ENCODE measurements at regions of chr1 and their contacts with region 1.

Region 1: DNA sequence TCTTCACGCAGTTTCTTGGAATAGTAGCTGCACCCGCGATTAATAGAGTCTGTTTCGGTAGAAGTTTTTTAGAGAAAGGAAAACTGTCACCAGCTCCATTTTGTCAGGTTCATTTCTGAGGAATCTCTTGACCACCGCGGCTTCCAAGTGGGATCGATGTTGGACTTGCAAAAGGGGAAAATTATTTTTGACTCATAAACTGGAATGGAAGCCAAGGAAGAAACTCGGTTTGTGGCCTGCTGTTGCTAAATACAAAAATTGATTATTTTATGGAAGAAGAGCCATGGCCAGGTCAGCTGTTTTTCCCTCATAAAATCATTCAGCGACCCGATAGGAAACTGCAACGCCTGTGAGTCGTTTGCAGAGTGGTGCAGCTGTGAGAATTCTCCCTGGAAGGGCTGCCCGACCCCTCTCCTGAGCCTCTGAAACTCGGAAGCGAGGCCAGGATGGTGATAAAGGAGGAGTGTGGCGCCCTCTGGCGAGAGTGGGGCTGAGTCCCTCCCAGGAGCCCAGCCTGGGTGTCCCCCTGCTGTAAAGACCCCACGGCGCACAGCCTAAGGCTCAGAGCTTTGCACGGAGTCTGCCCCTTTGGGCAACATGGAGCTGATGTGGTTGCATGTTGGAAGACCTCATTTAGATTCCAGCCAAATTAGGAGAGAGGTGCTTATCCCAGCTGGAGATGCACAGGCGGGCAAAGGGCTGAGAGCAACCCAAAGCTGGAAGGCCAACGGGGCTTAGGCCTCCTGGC is 83.6 kb upstream of the SLC25A33 start:
- DNase-seq: peak; percentile 94
- ATAC-seq: peak; percentile 98
- H3K4me3 Mint-ChIP-seq: no peak overlapping the region
- H3K27ac Mint-ChIP-seq: no peak overlapping the region; the same call in 1 of the 2 replicates
- H3K4me1 Mint-ChIP-seq: 0 out of 2 replicates have a peak, but pooled peaks cover 4% of the 10 kb centered on the region
- H3K27me3 Mint-ChIP-seq: no peaks in the 10 kb centered on the region
- CTCF ChIP-seq: peak; percentile 59

Region 2: DNA sequence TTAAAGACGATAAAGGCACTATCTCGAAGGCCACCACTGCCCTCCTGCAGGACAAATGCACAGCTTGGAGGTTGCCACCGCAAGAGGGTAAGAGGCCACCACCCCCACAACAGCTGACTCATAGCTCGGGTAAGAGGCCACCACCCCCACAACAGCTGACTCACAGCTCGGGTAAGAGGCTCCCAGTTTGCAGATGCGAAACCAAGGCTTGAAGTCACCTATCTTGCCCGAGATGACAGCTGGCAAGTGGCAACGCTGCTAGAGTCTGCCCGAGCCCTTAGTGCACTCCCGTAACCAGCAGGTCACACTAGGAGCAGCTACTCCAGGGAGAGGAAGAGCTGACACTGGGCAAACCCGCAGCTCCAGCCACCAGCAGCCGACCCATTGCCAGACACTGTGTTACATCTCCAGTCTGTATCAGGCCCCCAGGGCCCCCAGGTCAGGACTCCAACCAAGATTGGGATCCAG is 180.1 kb before region 1 on chr1:
- CTCF ChIA-PET with region 1: interaction called, 32 read pairs
- POLR2A ChIA-PET with region 1: no interaction called
- DNase-seq: no peak
- ATAC-seq: no peak
- H3K4me3 Mint-ChIP-seq: no peak overlapping the region
- H3K27ac Mint-ChIP-seq: no peak overlapping the region
- H3K4me1 Mint-ChIP-seq: peaks cover 28% of the 10 kb centered on the region
- H3K27me3 Mint-ChIP-seq: no peaks in the 10 kb centered on the region; the same call in 1 of the 2 replicates
- CTCF ChIP-seq: no peak

Region 3: DNA sequence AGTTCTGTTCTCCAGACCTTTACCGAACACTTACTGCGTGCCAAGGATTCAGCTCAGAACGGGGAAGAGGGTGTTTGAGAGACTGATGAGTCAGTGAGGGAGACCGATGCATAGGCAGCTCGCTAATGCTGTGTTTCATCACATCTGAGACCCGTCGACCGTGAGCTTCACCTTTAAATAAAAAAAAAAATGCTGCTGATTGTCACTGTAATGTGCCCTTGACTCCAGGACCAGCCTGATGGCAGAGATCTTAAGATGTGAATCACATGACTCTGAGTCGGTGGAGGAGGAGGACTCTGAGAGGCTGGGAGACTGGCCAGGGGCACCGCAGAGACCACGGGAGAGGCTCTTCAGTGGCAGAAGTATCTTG is 134.2 kb before region 1 on chr1:
- CTCF ChIA-PET with region 1: interaction called, 27 read pairs
- POLR2A ChIA-PET with region 1: no interaction called
- DNase-seq: no peak
- ATAC-seq: no peak
- H3K4me3 Mint-ChIP-seq: no peak overlapping the region
- H3K27ac Mint-ChIP-seq: peak overlapping the region; percentile 94
- H3K4me1 Mint-ChIP-seq: peaks cover 30% of the 10 kb centered on the region
- H3K27me3 Mint-ChIP-seq: no peaks in the 10 kb centered on the region
- CTCF ChIP-seq: no peak

Region 4: DNA sequence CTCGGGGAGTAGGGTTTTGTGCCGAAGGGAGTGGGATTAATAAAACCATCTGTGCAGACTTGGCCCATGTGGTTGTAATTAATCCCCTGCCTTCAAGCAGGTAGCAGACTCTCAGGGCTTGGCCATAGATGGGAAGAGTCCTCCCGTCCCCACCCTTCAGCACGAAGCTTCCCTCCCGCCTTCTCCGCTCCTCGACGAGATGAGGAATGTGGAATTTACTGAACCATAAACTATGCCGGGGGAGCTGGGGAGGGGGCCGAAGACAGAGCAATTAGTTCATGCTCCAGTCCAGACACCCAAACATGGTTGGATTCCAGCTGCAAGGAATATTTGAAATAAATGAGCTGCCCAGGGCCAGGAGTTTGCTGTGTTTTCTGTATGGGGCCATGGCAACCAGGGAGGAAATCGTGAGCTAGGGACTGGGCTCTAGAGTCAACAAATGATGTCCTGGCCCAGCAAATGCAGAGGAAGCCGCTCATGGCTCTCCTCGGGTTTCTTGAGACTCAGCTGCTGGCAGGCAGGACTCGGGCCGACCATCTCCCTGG is 84.2 kb before region 1 on chr1:
- CTCF ChIA-PET with region 1: interaction called, 18 read pairs
- POLR2A ChIA-PET with region 1: no interaction called
- DNase-seq: no peak
- ATAC-seq: peak; percentile 47
- H3K4me3 Mint-ChIP-seq: no peak overlapping the region
- H3K27ac Mint-ChIP-seq: no peak overlapping the region
- H3K4me1 Mint-ChIP-seq: peaks cover 2% of the 10 kb centered on the region; the same call in 1 of the 2 replicates
- H3K27me3 Mint-ChIP-seq: no peaks in the 10 kb centered on the region
- CTCF ChIP-seq: no peak

Region 5: DNA sequence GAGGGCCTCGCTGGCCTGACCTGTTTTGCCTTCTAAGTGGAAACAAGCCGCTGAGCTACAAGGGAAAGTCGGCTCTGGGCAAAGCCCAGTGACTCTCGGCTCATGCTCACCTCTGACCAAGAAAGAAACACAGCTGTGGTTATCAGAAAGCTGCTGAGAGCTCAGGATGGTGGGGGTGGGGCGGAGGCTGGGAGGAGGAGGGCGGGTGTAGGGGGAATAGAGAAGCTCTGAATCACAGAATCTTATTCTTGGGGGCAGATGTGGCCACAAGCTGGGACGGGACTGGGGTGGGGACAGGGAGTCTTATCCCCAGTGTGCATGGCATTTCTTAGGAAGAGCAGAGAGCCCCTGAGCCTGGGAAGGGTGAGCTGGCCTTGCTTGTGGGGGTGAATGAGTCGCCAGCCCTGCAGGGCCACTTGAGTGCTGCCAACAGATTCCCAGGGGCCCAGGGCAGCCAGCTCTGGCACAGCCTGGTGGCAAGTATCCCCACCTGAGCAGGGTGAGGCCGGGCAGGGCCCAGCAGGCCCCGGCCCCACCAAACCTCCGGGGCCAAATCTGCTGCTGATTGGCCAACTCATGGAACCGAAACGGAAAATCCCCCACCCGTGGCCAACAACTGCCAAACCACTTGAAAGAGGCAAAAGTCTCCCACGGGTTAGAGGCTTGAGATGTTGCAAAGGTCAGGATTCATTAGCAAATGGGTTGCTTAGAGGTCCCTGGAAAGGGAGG is 42.3 kb before region 1 on chr1:
- CTCF ChIA-PET with region 1: interaction called, 15 read pairs
- POLR2A ChIA-PET with region 1: no interaction called
- DNase-seq: no peak
- ATAC-seq: peak; percentile 65
- H3K4me3 Mint-ChIP-seq: no peak overlapping the region
- H3K27ac Mint-ChIP-seq: no peak overlapping the region
- H3K4me1 Mint-ChIP-seq: peaks cover 8% of the 10 kb centered on the region
- H3K27me3 Mint-ChIP-seq: no peaks in the 10 kb centered on the region
- CTCF ChIP-seq: no peak

Region 6: DNA sequence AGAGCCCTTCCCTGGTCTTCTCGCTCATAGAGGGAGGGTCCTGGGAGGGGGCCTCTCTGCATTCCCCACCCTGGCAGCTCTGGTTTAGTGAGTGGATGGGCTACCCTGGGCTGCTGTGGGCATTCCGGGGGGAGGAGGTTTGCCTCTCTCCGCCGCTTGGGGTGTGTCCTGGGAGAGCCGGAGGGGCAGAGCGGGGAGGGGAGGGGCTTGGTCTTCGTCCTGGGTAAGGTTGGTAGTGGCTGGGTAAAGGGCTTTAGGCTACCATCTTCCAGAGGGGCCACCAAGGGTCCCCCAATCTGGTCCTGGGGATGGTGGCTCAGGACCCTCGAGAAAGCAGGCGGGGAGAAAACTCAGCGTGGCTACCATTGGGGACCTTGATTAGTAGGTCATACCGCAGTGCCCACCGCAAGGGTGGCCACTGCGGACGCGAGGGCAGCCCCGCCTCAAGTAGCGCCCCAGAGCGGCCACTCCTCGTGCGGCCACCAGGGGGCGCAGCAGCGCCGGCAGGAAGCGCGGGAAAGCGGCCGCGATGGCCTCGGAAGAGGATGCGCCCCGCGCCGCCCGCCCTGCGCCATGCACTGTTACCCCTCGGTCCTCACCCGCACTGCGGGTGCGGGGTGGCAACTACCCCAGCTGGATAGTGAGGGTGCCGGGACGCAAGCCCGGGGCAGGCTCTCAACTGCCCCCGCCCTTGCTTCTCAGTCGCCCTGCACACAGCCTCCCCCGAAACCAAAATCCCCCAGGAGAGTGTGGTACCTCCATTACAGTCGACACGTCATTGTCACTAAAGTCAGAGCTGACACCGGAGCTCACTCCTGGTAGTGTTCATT is 39.5 kb after region 1 on chr1:
- CTCF ChIA-PET with region 1: interaction called, 26 read pairs
- POLR2A ChIA-PET with region 1: no interaction called
- DNase-seq: peak; percentile 79
- ATAC-seq: peak; percentile 85
- H3K4me3 Mint-ChIP-seq: peak overlapping the region; percentile 57
- H3K27ac Mint-ChIP-seq: no peak overlapping the region
- H3K4me1 Mint-ChIP-seq: no peaks in the 10 kb centered on the region
- H3K27me3 Mint-ChIP-seq: peaks cover 37% of the 10 kb centered on the region
- CTCF ChIP-seq: peak; percentile 99

Region 7: DNA sequence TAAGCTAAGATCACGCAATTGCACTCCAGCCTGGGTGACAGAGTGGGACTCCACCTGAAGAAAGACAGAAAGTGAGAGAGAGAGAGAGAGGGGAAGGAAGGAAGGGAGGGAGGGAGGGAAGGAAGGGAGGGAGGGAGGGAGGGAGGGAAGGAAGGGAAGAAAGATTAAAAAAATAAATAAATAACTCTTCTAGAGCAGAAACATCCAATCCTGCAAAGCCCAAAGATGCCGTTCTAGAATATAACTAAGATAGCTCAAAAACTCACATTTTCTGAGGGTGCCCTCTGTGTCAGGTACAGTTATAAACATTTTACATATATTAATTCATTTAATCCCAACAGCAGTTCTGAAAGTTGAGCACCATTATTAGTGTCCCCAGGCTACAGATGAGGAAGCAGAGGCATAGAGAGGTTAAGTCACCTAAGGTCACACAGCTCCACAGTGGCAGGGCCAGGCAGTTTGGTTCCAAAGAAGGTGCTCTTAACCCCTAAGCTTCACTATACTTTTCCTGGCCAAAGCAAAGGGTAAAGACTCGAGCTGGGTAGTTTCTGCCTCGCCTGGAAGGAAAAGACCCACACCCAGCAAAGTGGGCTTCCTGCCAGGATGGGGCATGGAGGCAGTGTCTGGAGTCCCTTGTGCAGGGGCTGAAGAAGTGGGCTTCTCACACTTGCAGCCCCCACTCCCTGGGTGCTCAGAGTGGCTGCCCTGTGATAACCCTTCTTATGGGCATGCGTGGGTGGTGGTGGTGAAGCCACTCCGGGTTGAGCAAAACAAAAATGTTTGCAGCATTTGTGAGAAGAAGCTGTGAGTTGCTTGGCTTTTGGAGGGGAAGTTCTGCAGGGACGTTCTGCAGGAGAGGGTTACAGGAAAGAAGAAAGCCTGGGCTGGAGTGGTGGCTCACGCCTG is 187.9 kb after region 1 on chr1:
- CTCF ChIA-PET with region 1: no interaction called
- POLR2A ChIA-PET with region 1: no interaction called
- DNase-seq: no peak
- ATAC-seq: no peak
- H3K4me3 Mint-ChIP-seq: no peak overlapping the region
- H3K27ac Mint-ChIP-seq: no peak overlapping the region
- H3K4me1 Mint-ChIP-seq: no peaks in the 10 kb centered on the region
- H3K27me3 Mint-ChIP-seq: no peaks in the 10 kb centered on the region
- CTCF ChIP-seq: no peak

Measured in WTC11 (cell line).